IMR-90 (cell line): ENCODE measurements at regions of chr2 and their contacts with region 1.

Region 1: GRCh38 chr2:174593574-174594203 is 3.9 kb downstream of the WIPF1 start:
- DNase-seq: peak; percentile 84
- ATAC-seq: peak; percentile 42
- H3K4me3 ChIP-seq: no peak overlapping the region
- H3K27ac ChIP-seq: peak overlapping the region; percentile 60; the same call in 1 of the 2 replicates
- H3K4me1 ChIP-seq: peaks cover 18% of the 10 kb centered on the region
- H3K27me3 ChIP-seq: no peaks in the 10 kb centered on the region
- CTCF ChIP-seq: no peak
- POLR2A ChIP-seq: no peak
- RAD21 ChIP-seq: no peak

Region 2: DNA sequence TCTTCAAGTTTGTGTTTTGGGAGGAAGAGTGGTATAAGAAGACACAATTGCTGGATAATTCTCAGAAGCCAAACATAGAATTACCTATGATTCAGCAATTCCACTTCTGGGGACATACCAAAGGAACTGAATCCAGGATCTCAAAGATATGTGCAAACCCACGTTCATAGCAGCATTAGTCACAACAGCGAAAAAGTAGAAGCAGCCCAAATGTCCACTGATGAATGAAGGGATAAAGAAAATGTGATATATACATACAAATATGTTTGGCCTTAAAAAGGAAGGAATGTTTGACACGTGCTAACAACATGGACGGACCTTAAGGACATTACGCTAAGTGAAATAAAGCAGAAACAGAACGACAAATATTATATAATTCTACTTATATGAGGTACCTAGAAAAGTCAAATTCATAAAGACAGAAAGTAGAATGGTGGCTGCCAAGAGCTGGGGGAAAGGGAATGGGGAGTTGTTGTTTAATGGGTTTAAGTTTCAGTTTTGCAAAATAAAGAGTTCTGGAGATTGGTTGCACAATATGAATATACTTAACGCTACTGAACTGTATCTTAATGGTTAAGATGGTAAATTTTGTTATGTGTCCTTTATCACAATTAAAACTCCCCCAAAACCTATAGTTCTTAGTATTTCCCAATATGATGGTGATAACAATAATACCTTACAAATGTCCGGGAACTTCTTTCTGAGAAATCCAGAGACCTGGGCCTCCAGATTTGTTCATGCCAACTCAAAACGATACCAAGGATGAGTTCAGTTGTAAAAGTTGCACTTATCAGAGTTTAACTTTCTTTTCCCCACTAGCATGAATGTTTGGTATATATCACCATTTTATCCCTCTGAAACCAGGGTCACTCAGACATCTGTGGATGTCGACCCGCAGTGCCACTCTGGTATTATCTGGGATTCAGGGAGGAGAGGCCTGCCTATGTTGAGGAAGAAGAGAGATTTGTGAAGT is 37.6 kb after region 1 on chr2:
- CTCF ChIA-PET with region 1: no interaction called
- POLR2A ChIA-PET with region 1: no interaction called
- dilution Hi-C with region 1: no loop called
- in situ Hi-C with region 1: no loop called
- intact Hi-C with region 1: no loop called
- DNase-seq: peak; percentile 90
- ATAC-seq: peak; percentile 79
- H3K4me3 ChIP-seq: no peak overlapping the region
- H3K27ac ChIP-seq: no peak overlapping the region
- H3K4me1 ChIP-seq: peaks cover 13% of the 10 kb centered on the region
- H3K27me3 ChIP-seq: no peaks in the 10 kb centered on the region
- CTCF ChIP-seq: no peak
- POLR2A ChIP-seq: no peak
- RAD21 ChIP-seq: no peak

Region 3: GRCh38 chr2:174997110-174997509 is 403.4 kb after region 1 on chr2:
- CTCF ChIA-PET with region 1: no interaction called
- POLR2A ChIA-PET with region 1: no interaction called
- dilution Hi-C with region 1: no loop called
- in situ Hi-C with region 1: no loop called
- intact Hi-C with region 1: loop called (anchors 10 kb)
- DNase-seq: no peak
- ATAC-seq: no peak
- H3K4me3 ChIP-seq: no peak overlapping the region
- H3K27ac ChIP-seq: no peak overlapping the region
- H3K4me1 ChIP-seq: no peaks in the 10 kb centered on the region
- H3K27me3 ChIP-seq: no peaks in the 10 kb centered on the region; the same call in 1 of the 2 replicates
- CTCF ChIP-seq: no peak
- POLR2A ChIP-seq: no peak
- RAD21 ChIP-seq: no peak